Activated CD8-positive, alpha-beta memory T cell treated with anti-CD3 and anti-CD28 coated beads, Interleukin-2, amount 10 ng/mL, durations not matched to agents 7 days and 5 days (primary cell): ENCODE measurements at regions of chr9 and their contacts with region 1.

Region 1: DNA sequence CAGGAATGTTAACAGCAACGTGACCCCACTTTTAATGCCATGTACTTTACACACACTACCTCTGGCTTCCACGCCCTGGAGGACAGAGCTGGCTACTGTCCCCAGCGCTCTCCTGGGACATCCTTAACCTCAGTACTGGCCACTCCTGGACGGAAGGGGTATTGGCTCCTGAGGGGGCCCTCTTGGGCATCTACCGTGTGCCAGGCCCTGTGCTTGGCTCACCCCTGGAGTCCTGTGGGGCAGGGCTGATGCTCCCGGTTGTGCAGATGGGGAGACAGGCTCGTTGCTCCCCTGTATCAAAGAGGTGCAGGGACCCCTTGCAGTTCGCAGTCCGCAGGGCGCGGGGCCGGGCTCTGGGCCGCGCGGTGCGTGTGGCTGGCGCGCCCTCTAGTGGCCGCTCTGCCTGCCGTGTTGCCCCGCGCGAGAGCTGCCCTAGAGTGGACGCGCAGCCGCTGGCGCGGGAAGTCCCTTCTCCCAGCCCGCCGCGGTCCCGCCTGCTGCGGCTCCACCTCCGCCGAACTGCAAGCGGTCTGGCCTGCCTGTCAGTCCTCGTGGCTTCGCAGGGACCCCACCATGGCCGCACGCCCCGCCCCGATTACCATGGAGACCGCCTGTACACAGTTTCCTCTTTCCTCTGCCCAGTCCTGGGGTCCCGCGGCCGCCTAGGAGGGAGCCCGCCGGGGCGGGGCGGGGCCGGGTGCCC is at the start of gene WDR38:
- DNase-seq: peak; percentile 86
- ATAC-seq: peak; percentile 93
- H3K4me3 Mint-ChIP-seq: peak within 1 kb of the TSS; percentile 58
- H3K27ac Mint-ChIP-seq: no peak within 1 kb of the TSS
- H3K4me1 Mint-ChIP-seq: peaks cover 17% of the 10 kb centered on the region
- H3K27me3 Mint-ChIP-seq: peaks cover 11% of the 10 kb centered on the region
- total RNA-seq, gene WDR38: not detected

Region 2: GRCh38 chr9:124771021-124771866 is 81.7 kb before region 1 on chr9 and contains the start of gene NR6A1:
- CTCF ChIA-PET with region 1: interaction called, 380 read pairs
- DNase-seq: peak; percentile 96
- ATAC-seq: peak; percentile 93
- H3K4me3 Mint-ChIP-seq: peak within 1 kb of the TSS; percentile 78
- H3K27ac Mint-ChIP-seq: peak within 1 kb of the TSS; percentile 82
- H3K4me1 Mint-ChIP-seq: peaks cover 45% of the 10 kb centered on the region
- H3K27me3 Mint-ChIP-seq: peaks cover 66% of the 10 kb centered on the region
- total RNA-seq, gene NR6A1: 0.44 to 1.2 TPM

Region 3: GRCh38 chr9:124808241-124808956 is 44.6 kb before region 1 on chr9:
- CTCF ChIA-PET with region 1: no interaction called
- DNase-seq: no peak
- ATAC-seq: no peak
- H3K4me3 Mint-ChIP-seq: no peak overlapping the region
- H3K27ac Mint-ChIP-seq: no peak overlapping the region
- H3K4me1 Mint-ChIP-seq: no peaks in the 10 kb centered on the region
- H3K27me3 Mint-ChIP-seq: peaks cover 3% of the 10 kb centered on the region

Region 4: GRCh38 chr9:124831642-124832364 is 21.2 kb before region 1 on chr9:
- CTCF ChIA-PET with region 1: interaction called, 10 read pairs
- DNase-seq: no peak
- ATAC-seq: no peak
- H3K4me3 Mint-ChIP-seq: no peak overlapping the region
- H3K27ac Mint-ChIP-seq: no peak overlapping the region
- H3K4me1 Mint-ChIP-seq: no peaks in the 10 kb centered on the region
- H3K27me3 Mint-ChIP-seq: peaks cover 7% of the 10 kb centered on the region

Region 5: DNA sequence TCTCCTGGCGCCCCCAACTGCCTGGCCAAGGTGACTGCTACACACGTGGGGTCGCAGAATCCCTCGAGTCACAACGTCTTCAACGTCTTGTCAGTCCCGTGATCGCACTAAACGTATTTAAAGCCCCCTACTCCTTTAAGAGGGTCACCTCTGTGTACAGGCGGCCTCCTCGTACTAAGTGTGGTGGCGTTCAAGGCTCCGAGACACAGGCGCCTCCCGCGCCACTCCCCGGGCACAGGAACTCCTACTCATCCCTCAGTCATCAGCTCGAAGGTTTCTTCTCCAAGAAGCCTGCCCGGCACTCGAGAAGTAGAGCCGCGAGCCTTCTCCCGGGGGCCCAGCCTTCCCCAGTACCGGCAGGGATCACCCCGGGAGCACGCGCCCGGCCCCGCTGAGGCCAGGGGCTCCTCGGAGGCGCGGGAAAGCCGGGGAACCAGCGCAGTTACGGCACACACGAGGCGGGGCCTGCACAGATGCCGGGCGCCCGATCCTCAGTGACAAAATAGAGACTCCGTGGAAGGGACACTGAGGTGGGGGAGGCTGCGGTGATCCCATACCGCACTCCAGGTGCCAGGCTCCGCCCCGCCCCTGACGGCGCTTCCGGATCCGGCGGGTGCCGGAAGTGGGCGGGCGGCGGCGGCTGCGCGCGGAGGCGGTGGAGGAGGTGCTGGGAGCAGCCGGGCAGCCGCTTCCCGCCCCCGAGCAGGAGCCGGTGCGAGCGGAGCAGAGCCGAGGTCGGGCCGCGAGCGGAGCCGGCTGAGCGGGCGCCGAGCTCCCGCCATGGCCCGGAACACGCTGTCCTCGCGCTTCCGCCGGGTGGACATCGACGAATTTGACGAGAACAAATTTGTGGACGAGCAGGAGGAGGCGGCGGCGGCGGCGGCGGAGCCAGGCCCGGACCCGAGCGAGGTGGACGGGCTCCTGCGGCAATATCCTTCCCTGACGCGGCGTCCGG is 15.8 kb after region 1 on chr9:
- CTCF ChIA-PET with region 1: interaction called, 22 read pairs
- DNase-seq: peak; percentile 93
- ATAC-seq: peak; percentile 78
- H3K4me3 Mint-ChIP-seq: peak overlapping the region; percentile 92
- H3K27ac Mint-ChIP-seq: peak overlapping the region; percentile 99
- H3K4me1 Mint-ChIP-seq: peaks cover 48% of the 10 kb centered on the region
- H3K27me3 Mint-ChIP-seq: no peaks in the 10 kb centered on the region

Region 6: DNA sequence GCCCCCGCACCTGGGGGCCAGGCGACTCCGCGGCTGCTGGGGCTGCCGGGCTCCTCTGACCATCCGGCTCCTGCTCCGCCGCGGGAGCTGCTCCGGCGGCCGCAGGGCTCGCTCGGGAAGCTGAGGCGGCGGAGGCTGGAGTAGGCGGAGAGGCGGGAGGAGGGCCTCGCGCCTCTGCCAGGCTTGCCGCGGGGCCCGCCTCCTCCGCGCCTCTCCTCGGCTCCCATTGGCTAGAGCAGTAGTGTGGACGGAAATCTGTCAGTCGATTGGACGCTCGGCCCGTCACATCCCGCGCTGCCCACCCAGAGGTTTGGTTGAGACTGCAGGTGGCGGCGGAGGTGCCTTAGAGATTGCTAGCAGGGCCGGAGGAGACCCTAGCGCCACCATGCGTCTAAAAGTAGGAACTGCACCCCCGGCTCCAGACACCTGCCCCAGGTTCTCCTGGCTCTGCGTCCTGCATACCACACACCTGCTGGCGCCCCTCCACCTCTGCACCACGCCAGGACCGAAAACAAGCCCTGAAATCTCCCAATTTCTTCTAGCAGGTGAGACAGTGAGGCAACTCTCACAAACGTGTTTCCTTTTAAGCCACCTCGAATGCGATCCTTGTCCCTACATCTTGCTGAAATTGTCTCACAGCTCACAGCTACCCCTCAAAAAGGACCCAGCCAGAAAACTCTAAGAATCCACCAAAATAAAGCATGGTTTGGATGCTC is 290.6 kb after region 1 on chr9 and contains the start of gene SCAI:
- CTCF ChIA-PET with region 1: interaction called, 17 read pairs
- DNase-seq: peak; percentile 100
- ATAC-seq: peak; percentile 100
- H3K4me3 Mint-ChIP-seq: peak within 1 kb of the TSS; percentile 91
- H3K27ac Mint-ChIP-seq: peak within 1 kb of the TSS; percentile 78
- H3K4me1 Mint-ChIP-seq: peaks cover 35% of the 10 kb centered on the region
- H3K27me3 Mint-ChIP-seq: no peaks in the 10 kb centered on the region
- total RNA-seq, gene SCAI: 9.4 to 13.7 TPM